Natural killer cell (primary cell): ENCODE measurements at regions of chr20 and their contacts with region 1.

Region 1: DNA sequence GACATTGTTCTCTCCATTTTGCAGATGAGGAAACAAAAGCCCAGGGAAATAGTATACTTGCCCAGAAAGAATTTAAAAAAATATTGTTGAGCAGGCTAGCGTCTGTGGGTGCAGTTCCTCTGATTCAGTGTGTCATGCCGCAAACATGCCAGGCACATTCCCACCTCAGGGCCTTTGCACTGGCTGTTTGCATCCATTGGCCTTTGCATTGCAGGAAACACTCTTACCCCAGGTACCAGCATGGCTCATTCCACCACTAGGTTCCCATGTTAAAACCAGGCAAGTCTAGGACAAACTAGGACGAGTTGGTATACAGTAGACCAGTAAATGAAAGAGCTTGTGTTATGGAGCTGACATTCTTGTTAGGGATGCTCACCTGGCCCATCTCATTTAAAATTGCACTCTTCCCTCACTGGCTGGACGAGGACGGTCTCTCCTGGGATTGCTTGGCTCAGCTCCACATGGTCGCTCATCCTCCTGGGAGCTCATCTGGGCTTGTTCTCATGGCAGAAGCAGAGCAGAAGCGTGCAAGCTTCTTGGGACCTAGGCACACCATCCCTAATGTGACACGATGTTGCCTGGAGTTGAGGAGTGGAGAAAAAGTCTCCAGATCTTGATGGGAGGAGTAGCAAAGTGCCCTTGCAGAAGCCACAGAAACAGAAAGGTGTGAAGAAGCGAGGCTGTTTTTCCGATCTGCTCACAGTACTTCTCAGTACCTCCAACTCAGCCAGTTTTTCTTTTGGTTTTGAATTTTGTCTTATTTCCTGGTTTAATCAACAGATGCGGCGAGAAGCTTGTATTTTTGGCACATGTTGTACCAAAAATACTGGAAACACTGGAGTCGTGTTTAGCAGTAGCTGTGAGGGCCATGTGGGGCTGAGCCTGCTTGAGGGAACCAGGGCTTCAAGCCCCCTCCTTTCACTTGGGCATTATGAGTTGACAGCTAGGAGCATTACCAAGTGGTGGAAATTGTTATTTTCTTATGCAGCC is 13.9 kb downstream of the ZNF831 start:
- DNase-seq: peak in 1 of 2 donors; percentile 73
- ATAC-seq: peak; percentile 79 to 85 (median 80)
- H3K4me3 ChIP-seq: peak overlapping the region; percentile 8
- H3K4me3 Mint-ChIP-seq: peak overlapping the region; percentile 95
- H3K27ac ChIP-seq: peak overlapping the region; percentile 97
- H3K27ac Mint-ChIP-seq: peak overlapping the region; percentile 96 to 98
- H3K4me1 ChIP-seq: peaks cover 64% of the 10 kb centered on the region
- H3K4me1 Mint-ChIP-seq: peaks cover 87 to 94% of the 10 kb centered on the region in 2 donors
- H3K27me3 ChIP-seq: no peaks in the 10 kb centered on the region
- H3K27me3 Mint-ChIP-seq: no peaks in the 10 kb centered on the region
- CTCF ChIP-seq: no peak

Region 2: GRCh38 chr20:59165891-59166709 is 11.5 kb before region 1 on chr20:
- intact Hi-C with region 1: loop called (anchors 1 kb)
- DNase-seq: peak in 1 of 2 donors; percentile 72
- ATAC-seq: peak; percentile 37 to 54 (median 52)
- H3K4me3 ChIP-seq: peak overlapping the region; percentile 62
- H3K4me3 Mint-ChIP-seq: peak overlapping the region; percentile 94
- H3K27ac ChIP-seq: peak overlapping the region; percentile 100
- H3K27ac Mint-ChIP-seq: peak overlapping the region; percentile 100
- H3K4me1 ChIP-seq: peaks cover 34% of the 10 kb centered on the region
- H3K4me1 Mint-ChIP-seq: peaks cover 90 to 93% of the 10 kb centered on the region in 2 donors
- H3K27me3 ChIP-seq: no peaks in the 10 kb centered on the region
- H3K27me3 Mint-ChIP-seq: no peaks in the 10 kb centered on the region
- CTCF ChIP-seq: no peak